Aorta (tissue), 5 donors: ENCODE measurements at regions of chr6 and their contacts with region 1.

Region 1: GRCh38 chr6:53651764-53652401 is 13.7 kb downstream of the KLHL31 start:
- DNase-seq: peak; percentile 85 to 89
- ATAC-seq: peak; percentile 90
- H3K4me3 ChIP-seq: peak overlapping the region; percentile 13 to 24
- H3K27ac ChIP-seq: no peak overlapping the region
- H3K4me1 ChIP-seq: no peaks in the 10 kb centered on the region
- H3K27me3 ChIP-seq: no peaks in the 10 kb centered on the region

Region 2: DNA sequence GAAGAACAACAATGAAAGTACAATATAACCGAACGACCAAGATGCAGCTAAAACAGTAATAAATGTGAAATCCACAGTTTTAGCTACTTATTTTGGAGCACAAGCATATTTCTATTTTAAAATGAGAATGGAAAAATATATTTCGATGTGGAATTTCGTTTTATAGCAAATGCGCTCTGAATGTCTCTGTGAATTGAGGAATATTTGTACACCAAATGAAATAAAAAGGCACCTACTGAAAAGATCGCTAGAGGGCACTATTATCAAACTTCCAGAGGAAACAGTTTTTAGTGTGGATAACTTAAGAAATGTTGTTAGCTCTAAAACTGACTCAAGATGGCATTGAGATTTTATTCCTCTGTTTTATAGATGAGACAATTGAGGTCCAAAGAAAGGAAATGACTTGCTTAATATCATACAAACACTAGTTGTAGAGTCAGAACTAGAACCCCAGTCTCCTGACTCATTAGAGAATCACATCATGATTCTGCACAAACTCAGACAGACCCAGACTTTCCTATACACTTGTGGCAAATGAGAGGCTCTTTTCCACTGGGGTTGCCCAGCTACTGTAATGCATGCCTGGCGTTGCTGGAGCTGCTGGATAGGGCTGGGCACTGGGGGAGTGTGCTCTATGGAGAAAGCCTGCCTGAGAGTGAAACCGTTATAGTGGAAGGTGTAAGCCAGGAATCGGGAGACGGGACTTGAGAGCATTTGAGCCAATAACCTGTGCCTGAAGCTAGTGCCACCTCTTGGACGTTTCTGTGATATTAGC is 158.8 kb before region 1 on chr6:
- intact Hi-C with region 1: loop called (anchors 5 kb)
- DNase-seq: no peak
- ATAC-seq: peak; percentile 83
- H3K4me3 ChIP-seq: peak overlapping the region; percentile 41 to 42
- H3K27ac ChIP-seq: peak overlapping the region in 1 of 2 donors; percentile 57
- H3K4me1 ChIP-seq: no peaks in the 10 kb centered on the region
- H3K27me3 ChIP-seq: no peaks in the 10 kb centered on the region

Region 3: DNA sequence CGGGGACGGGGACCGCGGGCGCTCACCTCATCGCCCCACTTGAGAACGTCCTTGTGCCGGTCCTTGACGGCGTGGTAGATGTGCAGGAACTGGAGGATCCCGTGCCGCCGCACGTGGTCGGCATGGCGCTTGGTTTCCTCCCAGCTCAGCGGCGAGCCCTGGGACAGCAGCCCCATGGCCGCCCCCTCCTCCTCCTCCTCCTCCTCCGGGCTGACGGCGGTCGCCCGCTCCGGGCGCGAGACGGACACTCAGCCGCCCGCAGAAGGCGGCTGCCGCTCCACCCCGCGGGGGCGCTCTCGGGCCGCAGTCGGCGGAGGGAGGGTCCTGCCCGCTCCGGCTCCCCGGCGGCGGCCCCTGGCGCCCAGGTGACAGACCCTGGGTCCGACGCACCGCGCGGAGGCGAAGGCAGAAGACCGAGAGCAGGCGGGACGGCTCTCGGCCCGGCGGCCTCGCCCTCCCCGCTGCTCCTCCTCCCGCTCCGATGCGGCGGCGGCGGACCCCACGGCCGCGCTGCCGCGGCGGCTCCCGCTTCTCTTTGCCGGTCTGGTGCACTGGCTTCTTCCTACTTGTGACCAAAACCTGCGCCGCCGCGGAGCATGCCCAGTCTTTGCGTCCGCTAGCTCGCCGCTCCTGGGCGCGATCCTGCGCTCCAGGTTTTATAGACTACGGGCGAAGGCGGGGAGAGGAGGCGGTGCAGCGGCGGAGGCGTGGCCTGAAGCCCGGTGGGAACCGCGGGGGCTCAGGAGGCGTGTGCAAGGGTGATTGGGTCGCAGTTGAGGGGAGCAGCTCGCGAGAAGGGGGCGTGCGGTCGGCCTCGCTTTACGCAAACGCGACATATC is 107.2 kb before region 1 on chr6 and contains the start of gene GCLC:
- intact Hi-C with region 1: loop called (anchors 2 to 5 kb)
- DNase-seq: peak; percentile 97 to 98
- ATAC-seq: peak; percentile 93
- H3K4me3 ChIP-seq: peak within 1 kb of the TSS; percentile 67 to 86
- H3K27ac ChIP-seq: peak within 1 kb of the TSS in 1 of 2 donors; percentile 69
- H3K4me1 ChIP-seq: no peaks in the 10 kb centered on the region
- H3K27me3 ChIP-seq: no peaks in the 10 kb centered on the region
- total RNA-seq, gene GCLC: 19.0 to 22.0 TPM